Posterior cingulate gyrus (tissue), 11 donors: ENCODE measurements at regions of chr5 and their contacts with region 1.

Region 1: GRCh38 chr5:150350524-150351344 is 6.8 kb upstream of the TCOF1 start:
- DNase-seq: peak; percentile 55 to 95 (median 82)

Region 2: GRCh38 chr5:149759986-149760853 is 590.5 kb before region 1 on chr5:
- intact Hi-C with region 1: no loop called
- DNase-seq: peak in 1 of 10 donors; percentile 14

Region 3: DNA sequence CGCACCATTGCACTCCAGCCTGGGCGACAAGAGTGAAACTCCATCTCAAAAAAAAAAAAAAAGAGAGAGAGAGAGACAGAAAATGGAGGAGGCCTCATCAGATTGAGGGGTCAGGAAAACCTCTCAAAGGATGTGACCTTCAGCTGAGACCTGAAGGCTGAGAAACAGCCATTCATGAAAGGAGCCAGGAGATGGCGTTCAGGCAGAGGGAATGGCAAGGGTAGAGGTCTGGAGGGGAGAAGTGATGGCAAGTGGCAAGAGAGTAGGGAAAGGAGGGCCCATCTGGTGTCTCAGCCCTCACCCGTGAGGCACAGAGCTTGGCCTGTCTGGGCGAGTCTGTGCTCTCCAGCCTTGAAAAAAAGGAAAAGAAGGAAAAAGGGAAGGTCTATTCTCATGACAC is 78.2 kb before region 1 on chr5:
- intact Hi-C with region 1: loop called (anchors 1 kb)
- DNase-seq: peak in 4 of 10 donors; percentile 49 to 91 (median 56)

Region 4: DNA sequence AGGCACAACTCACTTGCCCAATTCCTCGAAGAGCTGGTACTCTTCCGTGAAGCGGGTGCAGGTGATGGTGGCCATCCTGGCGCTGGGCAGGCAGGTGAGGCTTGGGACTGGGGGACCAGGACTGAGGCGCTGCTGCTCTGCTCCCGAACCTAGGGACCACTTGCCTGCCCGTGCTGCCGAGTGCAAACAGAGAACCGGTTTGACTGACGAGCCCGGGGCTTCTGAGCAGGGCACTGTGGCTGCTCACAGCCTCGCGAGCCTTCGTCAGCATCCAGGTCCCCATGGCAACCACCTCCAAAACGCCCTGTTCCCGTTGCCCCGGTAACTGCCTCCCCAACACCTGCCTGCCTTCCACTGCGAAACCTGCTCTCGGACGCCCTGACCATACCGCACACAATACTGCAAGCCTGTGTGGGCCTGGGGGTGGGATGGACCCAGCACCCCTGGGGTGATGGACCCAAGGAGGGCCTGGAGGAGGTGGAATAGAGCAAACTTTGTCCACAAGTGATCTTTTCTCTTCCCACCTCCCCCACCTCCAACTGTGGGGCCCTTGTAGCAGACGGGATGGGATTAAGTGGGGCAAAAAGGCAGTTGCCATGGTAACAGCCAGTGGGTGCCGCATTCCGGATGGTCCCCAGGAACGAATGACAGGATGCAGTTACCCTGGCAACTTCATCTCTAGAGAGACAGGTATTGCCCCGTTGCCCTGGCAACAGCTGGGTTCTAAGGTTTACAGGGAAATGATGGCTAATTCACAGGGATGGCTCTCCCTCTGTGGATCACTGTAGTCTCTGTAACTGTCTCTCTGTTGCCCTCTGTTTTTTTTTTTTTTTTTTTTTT is 61.0 kb before region 1 on chr5 and contains the start of gene CAMK2A:
- intact Hi-C with region 1: loop called (anchors 5 kb)
- DNase-seq: peak; percentile 38 to 98 (median 89)